ENCODE measurements at regions of chr14 and their contacts with region 1.

Region 1: GRCh38 chr14:20970983-20971704 is 15.9 kb downstream of the RNASE2 start:
- DNase-seq: peak; percentile 87
- H3K4me3 ChIP-seq: peak overlapping the region; percentile 75
- H3K27ac ChIP-seq: no peak overlapping the region
- H3K4me1 ChIP-seq: peaks cover 13% of the 10 kb centered on the region
- CTCF ChIP-seq: peak; percentile 91

Region 2: GRCh38 chr14:20317720-20318119 is 653.4 kb before region 1 on chr14:
- CTCF ChIA-PET with region 1: no interaction called
- POLR2A ChIA-PET with region 1: no interaction called
- intact Hi-C with region 1: no loop called
- DNase-seq: no peak
- H3K4me3 ChIP-seq: no peak overlapping the region
- H3K27ac ChIP-seq: no peak overlapping the region
- H3K4me1 ChIP-seq: no peaks in the 10 kb centered on the region
- CTCF ChIP-seq: no peak

Region 3: GRCh38 chr14:20682435-20683124 is 288.6 kb before region 1 on chr14:
- CTCF ChIA-PET with region 1: no interaction called
- POLR2A ChIA-PET with region 1: interaction called, 5 read pairs
- intact Hi-C with region 1: loop called (anchors 5 kb)
- DNase-seq: peak; percentile 68
- H3K4me3 ChIP-seq: peak overlapping the region; percentile 74
- H3K27ac ChIP-seq: peak overlapping the region; percentile 49
- H3K4me1 ChIP-seq: peaks cover 42% of the 10 kb centered on the region
- CTCF ChIP-seq: no peak

Region 4: GRCh38 chr14:20697273-20698017 is 273.7 kb before region 1 on chr14:
- CTCF ChIA-PET with region 1: interaction called, 3 read pairs
- POLR2A ChIA-PET with region 1: no interaction called
- intact Hi-C with region 1: loop called (anchors 1 kb)
- DNase-seq: peak; percentile 75
- H3K4me3 ChIP-seq: peak overlapping the region; percentile 4
- H3K27ac ChIP-seq: no peak overlapping the region
- H3K4me1 ChIP-seq: no peaks in the 10 kb centered on the region
- CTCF ChIP-seq: peak; percentile 91

Region 5: GRCh38 chr14:20956376-20956976 is 14.7 kb before region 1 on chr14:
- CTCF ChIA-PET with region 1: interaction called, 11 read pairs
- POLR2A ChIA-PET with region 1: interaction called, 6 read pairs
- intact Hi-C with region 1: no loop called
- DNase-seq: no peak
- H3K4me3 ChIP-seq: no peak overlapping the region
- H3K27ac ChIP-seq: no peak overlapping the region
- H3K4me1 ChIP-seq: peaks cover 8% of the 10 kb centered on the region
- CTCF ChIP-seq: no peak

Region 6: DNA sequence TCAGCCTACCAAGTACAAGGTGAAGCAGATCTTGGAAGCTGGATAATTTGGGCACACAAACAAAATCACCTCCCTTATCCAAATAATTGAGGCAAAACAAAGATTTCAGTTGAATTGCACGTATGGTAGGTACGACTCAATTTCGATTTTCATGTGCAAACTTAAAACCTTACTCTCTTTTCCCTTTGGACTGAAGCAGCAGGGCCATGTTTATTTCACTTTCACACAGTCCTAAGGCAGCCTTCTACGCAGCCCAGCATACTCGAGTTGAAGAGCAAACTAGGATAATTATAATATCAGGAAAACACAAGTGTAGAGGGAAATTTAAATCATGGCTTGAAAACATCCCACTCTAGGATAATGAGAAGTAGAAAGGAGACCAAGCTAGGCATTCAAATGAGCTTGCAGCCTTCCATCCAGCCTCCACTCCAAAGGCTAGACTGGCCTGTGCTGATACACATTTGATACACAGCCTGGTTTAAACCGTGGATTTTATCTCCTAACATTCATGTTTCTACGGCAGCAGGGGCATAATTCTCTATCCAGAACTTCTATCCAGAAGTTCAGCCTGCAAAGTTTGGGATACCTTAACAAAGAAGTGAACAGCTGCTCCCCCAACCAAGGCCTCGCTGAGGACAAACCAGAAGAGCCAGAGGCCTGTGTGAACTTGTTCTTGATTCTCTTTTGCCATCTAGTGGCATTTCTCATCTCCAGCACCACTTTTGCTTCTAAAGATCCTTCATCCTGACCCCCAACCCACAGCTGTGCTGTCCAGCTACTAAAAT is 68.6 kb after region 1 on chr14:
- CTCF ChIA-PET with region 1: interaction called, 3 read pairs
- POLR2A ChIA-PET with region 1: no interaction called
- intact Hi-C with region 1: loop called (anchors 2 kb)
- DNase-seq: peak; percentile 47
- H3K4me3 ChIP-seq: no peak overlapping the region
- H3K27ac ChIP-seq: no peak overlapping the region
- H3K4me1 ChIP-seq: no peaks in the 10 kb centered on the region
- CTCF ChIP-seq: peak; percentile 76